ENCODE measurements at regions of chr17 and their contacts with region 1.

Region 1: DNA sequence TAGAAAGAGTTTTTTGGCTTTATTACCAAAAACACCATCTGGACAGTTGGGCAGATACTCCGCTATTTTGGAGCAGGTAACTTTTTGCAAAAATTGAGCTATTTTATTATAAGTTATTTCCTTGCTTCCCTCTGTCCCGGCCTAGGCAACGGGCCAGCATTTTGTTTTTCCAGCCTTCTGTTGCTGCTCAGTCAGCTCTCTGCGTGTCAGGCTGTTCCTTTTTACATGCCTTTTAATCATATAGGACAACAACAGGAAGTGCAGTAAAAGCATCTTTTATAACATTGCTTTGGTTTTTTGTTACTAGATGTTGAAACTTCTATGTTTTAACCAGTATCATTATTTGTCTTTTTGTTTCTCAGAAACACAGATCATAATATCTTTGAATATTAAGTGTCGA is 30.4 kb downstream of the PPM1D start:
- DNase-seq: peak in 2 of 3 donors; percentile 24 to 75
- ATAC-seq: no peak
- H3K4me3 ChIP-seq: no peak overlapping the region
- H3K27ac ChIP-seq: no peak overlapping the region
- H3K4me1 ChIP-seq: no peaks in the 10 kb centered on the region
- H3K27me3 ChIP-seq: no peaks in the 10 kb centered on the region

Region 2: DNA sequence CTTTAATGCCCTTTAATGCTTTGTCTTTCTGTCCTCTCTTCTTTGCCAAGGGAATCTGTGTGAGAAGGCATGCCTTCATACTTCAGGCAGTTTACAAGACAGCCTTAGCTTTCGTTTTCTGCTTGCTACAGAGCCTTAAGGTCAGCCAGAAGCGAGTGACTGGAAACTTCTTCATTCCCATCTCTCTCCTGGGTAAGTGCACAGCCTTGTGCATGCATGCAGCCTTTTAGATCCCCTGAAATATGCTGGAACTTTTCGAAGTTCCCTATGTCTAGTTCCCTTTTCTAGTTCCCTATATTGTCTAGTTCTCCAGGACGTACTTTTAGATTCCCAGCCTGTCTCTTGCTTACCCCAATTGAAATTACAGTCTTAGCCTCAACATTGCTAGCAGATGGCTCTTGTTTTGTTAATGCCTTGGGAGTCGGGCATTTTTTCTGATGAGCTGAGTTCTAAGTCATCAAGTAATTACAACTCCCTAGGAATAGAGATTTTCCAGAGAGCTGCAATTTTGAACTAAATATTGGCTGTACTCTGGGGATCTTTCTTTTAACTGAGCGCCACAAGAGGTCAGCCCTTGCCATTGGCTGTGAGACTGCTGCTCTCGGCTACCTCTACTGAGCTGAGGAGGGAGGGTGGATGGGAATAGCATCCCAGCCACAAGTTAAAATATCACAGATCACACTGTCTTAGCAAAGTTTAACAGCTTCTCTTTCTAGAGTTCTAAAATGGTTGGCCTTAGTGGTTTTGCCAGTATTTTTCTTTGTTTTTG is 53.0 kb before region 1 on chr17:
- intact Hi-C with region 1: loop called in 3 of 4 experiments (anchors 5 to 10 kb)
- DNase-seq: peak in 1 of 3 donors; percentile 68
- ATAC-seq: peak; percentile 79 to 89
- H3K4me3 ChIP-seq: peak overlapping the region; percentile 56
- H3K27ac ChIP-seq: peak overlapping the region; percentile 51
- H3K4me1 ChIP-seq: no peaks in the 10 kb centered on the region
- H3K27me3 ChIP-seq: no peaks in the 10 kb centered on the region

Region 3: DNA sequence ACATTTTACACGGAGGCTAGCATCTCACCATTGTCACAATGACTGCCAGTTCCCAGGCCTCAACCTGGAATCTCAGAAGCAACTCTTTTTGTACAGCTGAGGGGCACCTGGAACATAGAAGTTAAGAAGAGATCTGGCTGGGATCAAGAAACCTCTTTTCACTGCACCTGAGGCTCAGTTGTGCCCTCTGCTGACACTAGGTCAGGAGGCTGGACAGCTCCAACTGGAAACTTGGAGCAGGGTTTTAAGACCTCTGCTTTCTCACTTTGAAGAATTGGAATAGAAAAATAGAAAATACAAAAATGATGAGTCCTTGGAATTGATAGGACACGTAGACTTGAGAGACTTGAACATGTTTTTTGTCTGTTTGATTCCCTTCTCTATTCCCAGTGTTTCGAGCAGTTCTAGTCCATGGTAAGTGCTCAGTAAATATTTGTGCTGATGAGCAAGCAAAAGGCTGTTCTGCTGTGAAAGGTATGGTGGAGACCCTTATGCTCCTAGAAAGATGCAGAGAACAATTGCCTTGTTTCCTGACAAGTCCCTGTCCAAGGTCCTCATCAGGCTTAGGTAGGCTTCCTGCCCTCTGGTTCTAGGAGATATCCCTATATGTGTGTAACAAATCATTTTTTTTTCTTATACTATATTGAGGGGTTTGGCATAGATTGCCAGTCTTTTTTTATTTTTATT is 43.9 kb before region 1 on chr17:
- intact Hi-C with region 1: loop called in 1 of 4 experiments (anchors 10 kb)
- DNase-seq: no peak
- ATAC-seq: no peak
- H3K4me3 ChIP-seq: no peak overlapping the region
- H3K27ac ChIP-seq: no peak overlapping the region
- H3K4me1 ChIP-seq: no peaks in the 10 kb centered on the region
- H3K27me3 ChIP-seq: no peaks in the 10 kb centered on the region

Region 4: GRCh38 chr17:60769031-60769726 is 138.8 kb after region 1 on chr17:
- intact Hi-C with region 1: no loop called
- DNase-seq: no peak
- ATAC-seq: no peak
- H3K4me3 ChIP-seq: no peak overlapping the region
- H3K27ac ChIP-seq: no peak overlapping the region
- H3K4me1 ChIP-seq: no peaks in the 10 kb centered on the region
- H3K27me3 ChIP-seq: no peaks in the 10 kb centered on the region

Region 5: GRCh38 chr17:60874772-60875171 is 244.4 kb after region 1 on chr17:
- intact Hi-C with region 1: no loop called
- DNase-seq: no peak
- ATAC-seq: no peak
- H3K4me3 ChIP-seq: no peak overlapping the region
- H3K27ac ChIP-seq: no peak overlapping the region
- H3K4me1 ChIP-seq: no peaks in the 10 kb centered on the region
- H3K27me3 ChIP-seq: no peaks in the 10 kb centered on the region

Region 6: GRCh38 chr17:61118871-61119270 is 488.5 kb after region 1 on chr17:
- intact Hi-C with region 1: no loop called
- DNase-seq: no peak
- ATAC-seq: no peak
- H3K4me3 ChIP-seq: no peak overlapping the region
- H3K27ac ChIP-seq: no peak overlapping the region
- H3K4me1 ChIP-seq: no peaks in the 10 kb centered on the region
- H3K27me3 ChIP-seq: no peaks in the 10 kb centered on the region